PC-3 (cell line): ENCODE measurements at regions of chr13 and their contacts with region 1.

Region 1: DNA sequence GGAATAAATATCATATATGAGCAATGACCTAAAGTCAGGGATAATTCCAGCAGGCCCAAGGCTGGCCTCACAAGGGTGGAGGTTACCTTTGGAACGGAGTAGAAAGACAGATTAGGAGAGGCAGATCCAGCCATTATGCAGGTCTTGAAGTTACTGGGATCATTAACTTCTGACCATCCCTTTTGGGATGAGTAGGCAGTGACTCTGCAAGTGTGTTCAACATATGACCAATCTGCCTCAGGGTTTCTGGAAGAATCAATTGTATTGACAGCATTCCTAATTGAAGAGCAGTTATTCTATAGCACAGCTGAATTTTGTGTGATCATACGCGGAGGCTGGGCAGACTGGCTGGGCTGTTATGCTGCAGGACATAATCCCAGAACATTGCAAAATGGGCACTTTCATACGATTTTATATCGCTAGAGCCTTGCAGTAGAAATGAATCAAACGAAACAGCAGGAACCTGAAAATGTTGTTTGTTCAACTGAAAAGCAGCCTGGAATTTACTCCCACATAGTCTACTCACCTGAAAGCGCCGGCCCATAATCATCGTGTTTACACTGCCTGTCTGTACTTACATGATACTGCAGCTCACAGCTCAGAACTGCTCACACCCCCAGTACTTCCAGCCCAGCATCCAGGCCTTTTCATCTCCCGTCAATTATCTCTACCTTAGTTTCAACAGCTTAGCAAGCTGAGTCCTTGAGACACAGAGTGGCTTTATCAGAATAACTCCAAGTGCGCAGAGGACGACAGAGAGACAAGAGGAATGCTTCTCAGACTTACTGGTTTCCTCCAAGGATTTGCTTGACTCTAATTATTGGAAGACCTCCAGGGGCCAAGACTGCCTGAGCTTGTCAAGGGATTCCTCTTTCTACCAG is 556.1 kb downstream of the EFNB2 start:
- DNase-seq: peak; percentile 80
- ATAC-seq: peak; percentile 94
- H3K4me3 ChIP-seq: peak overlapping the region; percentile 53
- H3K27ac ChIP-seq: peak overlapping the region; percentile 75
- H3K4me1 ChIP-seq: peaks cover 29% of the 10 kb centered on the region
- H3K27me3 ChIP-seq: no peaks in the 10 kb centered on the region
- CTCF ChIP-seq: no peak

Region 2: GRCh38 chr13:105773863-105774538 is 205.4 kb before region 1 on chr13:
- CTCF ChIA-PET with region 1: no interaction called
- POLR2A ChIA-PET with region 1: no interaction called
- intact Hi-C with region 1: loop called (anchors 10 kb)
- DNase-seq: peak; percentile 72
- ATAC-seq: peak; percentile 90
- H3K4me3 ChIP-seq: peak overlapping the region; percentile 32; the same call in 1 of the 2 replicates
- H3K27ac ChIP-seq: peak overlapping the region; percentile 73
- H3K4me1 ChIP-seq: peaks cover 14% of the 10 kb centered on the region
- H3K27me3 ChIP-seq: no peaks in the 10 kb centered on the region
- CTCF ChIP-seq: no peak

Region 3: DNA sequence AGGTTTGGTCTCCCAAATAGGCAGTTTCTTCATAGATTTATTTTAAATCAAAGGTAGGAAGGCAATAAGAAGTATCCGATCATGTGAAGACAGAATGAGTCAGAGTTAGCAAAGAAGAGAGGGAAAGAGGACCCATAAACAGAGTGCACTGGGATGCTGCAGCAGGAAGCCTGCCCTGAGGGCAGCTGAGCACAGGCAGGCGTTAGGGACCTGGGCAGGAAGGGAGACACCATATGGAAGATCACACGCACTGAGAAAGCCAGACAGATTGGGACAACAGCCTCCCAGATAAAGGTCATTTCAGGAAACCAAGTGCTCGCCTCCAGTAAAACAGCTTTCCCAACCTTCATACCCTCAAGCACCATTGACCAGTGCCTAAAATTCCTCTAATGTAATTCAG is 41.9 kb before region 1 on chr13:
- CTCF ChIA-PET with region 1: no interaction called
- POLR2A ChIA-PET with region 1: no interaction called
- intact Hi-C with region 1: no loop called
- DNase-seq: peak; percentile 13
- ATAC-seq: peak; percentile 45; the same call in 1 of the 2 replicates
- H3K4me3 ChIP-seq: no peak overlapping the region
- H3K27ac ChIP-seq: no peak overlapping the region
- H3K4me1 ChIP-seq: 0 out of 2 replicates have a peak, but pooled peaks cover 7% of the 10 kb centered on the region
- H3K27me3 ChIP-seq: no peaks in the 10 kb centered on the region
- CTCF ChIP-seq: no peak